Activated CD8-positive, alpha-beta memory T cell treated with anti-CD3 and anti-CD28 coated beads, Interleukin-2, amount 10 ng/mL, durations not matched to agents 7 days and 5 days (primary cell): ENCODE measurements at regions of chr16 and their contacts with region 1.

Region 1: GRCh38 chr16:67993189-67994039 is 5.9 kb downstream of the DPEP2 start:
- DNase-seq: peak; percentile 88
- ATAC-seq: peak; percentile 91
- H3K4me3 Mint-ChIP-seq: peak overlapping the region; percentile 63
- H3K27ac Mint-ChIP-seq: peak overlapping the region; percentile 96
- H3K4me1 Mint-ChIP-seq: peaks cover 34% of the 10 kb centered on the region
- H3K27me3 Mint-ChIP-seq: no peaks in the 10 kb centered on the region

Region 2: DNA sequence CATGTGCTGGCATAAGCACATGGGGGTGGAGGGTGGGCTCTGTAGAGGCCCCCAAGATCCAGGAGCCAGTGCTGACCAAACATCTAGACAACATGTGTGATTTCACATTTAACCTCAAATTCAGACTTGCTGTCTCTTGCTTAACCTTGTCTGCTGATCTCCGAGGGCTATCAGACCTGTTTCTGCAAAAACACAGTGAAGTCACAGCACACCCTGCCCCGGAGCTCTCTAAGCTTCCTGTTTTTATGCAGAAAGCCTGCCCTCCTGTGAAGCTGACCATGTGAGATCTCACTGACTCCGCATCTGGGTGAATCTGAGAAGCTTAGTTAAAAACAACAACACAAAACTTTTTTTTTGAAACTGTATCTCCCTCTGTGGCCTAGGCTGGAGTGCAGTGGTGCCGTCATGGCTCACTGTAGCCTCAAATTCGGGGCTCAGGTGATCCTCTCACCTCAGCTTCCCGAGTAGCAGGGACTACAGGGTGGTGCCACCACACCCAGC is 12.4 kb after region 1 on chr16:
- CTCF ChIA-PET with region 1: interaction called, 18 read pairs
- DNase-seq: peak; percentile 55
- ATAC-seq: peak; percentile 80
- H3K4me3 Mint-ChIP-seq: no peak overlapping the region
- H3K27ac Mint-ChIP-seq: peak overlapping the region; percentile 90
- H3K4me1 Mint-ChIP-seq: peaks cover 14% of the 10 kb centered on the region
- H3K27me3 Mint-ChIP-seq: no peaks in the 10 kb centered on the region

Region 3: DNA sequence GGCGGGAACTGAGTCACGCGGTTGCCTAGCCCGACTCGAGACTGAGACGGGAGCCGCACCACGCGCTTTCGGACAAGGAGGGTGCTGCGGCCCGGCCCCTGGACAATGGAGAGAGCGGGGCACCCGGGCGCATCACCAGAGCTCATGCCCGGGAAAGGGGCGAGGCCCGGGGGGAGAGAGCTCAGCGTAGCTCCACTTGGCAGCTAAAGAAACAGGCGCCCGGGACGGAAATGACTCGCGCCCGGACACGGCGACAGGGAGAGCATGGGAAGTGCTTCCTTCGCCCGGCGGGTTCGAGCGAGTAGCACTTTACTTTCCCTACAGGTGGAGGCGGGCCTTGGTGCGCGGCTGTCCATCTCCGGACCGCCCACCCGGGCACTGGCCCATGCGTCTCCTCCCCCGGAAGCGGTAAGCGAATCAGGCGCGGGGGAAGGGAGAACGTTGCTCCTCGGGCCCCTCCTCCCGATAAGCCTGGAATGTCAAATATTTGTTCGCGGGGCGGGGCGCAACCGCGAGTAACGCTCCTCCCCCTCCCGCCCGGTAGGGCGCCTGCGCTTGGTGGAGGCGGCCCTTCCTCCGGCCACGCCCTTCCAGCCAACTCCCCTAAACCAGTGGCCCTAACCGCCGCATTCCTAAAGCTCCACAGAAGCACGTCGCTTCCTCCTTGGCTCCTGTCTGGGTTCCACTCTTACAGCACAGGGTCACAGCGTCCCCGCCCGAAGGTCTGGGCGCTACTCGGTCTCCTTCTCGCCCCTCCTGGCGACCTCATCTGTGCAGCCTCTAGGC is 244.0 kb after region 1 on chr16:
- CTCF ChIA-PET with region 1: no interaction called
- DNase-seq: peak; percentile 94
- ATAC-seq: peak; percentile 84
- H3K4me3 Mint-ChIP-seq: peak overlapping the region; percentile 82
- H3K27ac Mint-ChIP-seq: peak overlapping the region; percentile 90
- H3K4me1 Mint-ChIP-seq: peaks cover 34% of the 10 kb centered on the region
- H3K27me3 Mint-ChIP-seq: peaks cover 8% of the 10 kb centered on the region